ENCODE measurements at regions of chr9 and their contacts with region 1.

Region 1: GRCh38 chr9:128733256-128733655 is 9.3 kb upstream of the ZDHHC12 start:
- DNase-seq: peak; percentile 82 to 95 (median 88)
- ATAC-seq: peak; percentile 96
- H3K4me3 ChIP-seq: no peak overlapping the region
- H3K27ac ChIP-seq: peak overlapping the region; percentile 29
- H3K4me1 ChIP-seq: peaks cover 5 to 30% of the 10 kb centered on the region in 2 experiments; a peak in 4 of 5 replicates
- H3K27me3 ChIP-seq: no peaks in the 10 kb centered on the region
- CTCF ChIP-seq: peak; percentile 91 to 98 (median 91)
- EP300 ChIP-seq: no peak
- POLR2A ChIP-seq: no peak
- RAD21 ChIP-seq: peak; percentile 87 to 89

Region 2: DNA sequence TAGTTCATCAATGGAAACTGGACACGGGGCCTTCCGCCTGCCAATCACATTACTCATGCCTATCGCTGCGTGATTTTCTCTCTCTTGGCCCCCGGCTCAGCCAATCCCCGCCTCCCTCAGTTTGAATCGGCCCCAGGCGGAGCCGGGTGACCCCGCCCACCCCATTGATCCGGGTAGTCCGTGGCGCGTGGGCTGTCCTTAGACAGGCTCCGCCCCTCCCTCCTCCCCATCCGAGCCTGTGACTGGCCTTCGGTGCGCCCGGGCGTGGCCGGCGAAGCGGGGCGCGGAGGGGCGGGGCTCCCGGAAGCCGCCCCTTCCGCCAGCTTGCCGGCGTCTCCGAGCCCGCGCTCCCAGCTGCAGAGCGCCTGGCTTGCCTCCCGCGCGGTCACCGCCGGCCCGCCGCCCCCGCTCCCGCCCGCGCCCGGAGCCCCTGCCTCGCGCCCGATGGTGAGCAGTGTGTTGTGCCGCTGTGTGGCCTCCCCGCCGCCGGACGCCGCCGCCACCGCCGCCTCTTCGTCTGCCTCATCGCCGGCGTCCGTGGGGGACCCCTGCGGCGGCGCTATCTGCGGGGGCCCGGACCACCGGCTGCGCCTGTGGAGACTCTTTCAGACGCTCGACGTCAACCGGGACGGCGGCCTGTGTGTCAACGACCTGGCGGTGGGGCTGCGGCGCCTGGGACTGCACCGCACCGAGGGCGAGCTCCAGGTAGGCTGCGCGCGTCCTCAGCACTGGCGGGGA is 665.2 kb before region 1 on chr9 and contains the start of gene SLC25A25:
- CTCF ChIA-PET with region 1: no interaction called
- POLR2A ChIA-PET with region 1: no interaction called
- in situ Hi-C with region 1: no loop called
- intact Hi-C with region 1: no loop called
- DNase-seq: peak; percentile 96 to 99 (median 98)
- ATAC-seq: peak; percentile 83
- H3K4me3 ChIP-seq: peak within 1 kb of the TSS; percentile 89
- H3K27ac ChIP-seq: peak within 1 kb of the TSS; percentile 95
- H3K4me1 ChIP-seq: peaks cover 33 to 45% of the 10 kb centered on the region in 2 experiments
- H3K27me3 ChIP-seq: no peaks in the 10 kb centered on the region
- CTCF ChIP-seq: no peak
- EP300 ChIP-seq: 0 out of 2 replicates have a peak, but pooled peaks have one; percentile 8
- POLR2A ChIP-seq: no peak
- RAD21 ChIP-seq: no peak
- polyA plus RNA-seq, gene SLC25A25: 0.07 to 0.10 TPM

Region 3: GRCh38 chr9:128406848-128407391 is 326.3 kb before region 1 on chr9:
- CTCF ChIA-PET with region 1: no interaction called
- POLR2A ChIA-PET with region 1: no interaction called
- in situ Hi-C with region 1: no loop called
- intact Hi-C with region 1: no loop called
- DNase-seq: no peak
- ATAC-seq: no peak
- H3K4me3 ChIP-seq: no peak overlapping the region
- H3K27ac ChIP-seq: no peak overlapping the region
- H3K4me1 ChIP-seq: peaks cover 0 to 17% of the 10 kb centered on the region in 2 experiments; a peak in 2 of 5 replicates
- H3K27me3 ChIP-seq: peaks cover 0 to 11% of the 10 kb centered on the region in 2 experiments; a peak in 2 of 5 replicates
- CTCF ChIP-seq: no peak
- EP300 ChIP-seq: no peak
- POLR2A ChIP-seq: no peak
- RAD21 ChIP-seq: no peak

Region 4: GRCh38 chr9:128786681-128787601 is 53.7 kb after region 1 on chr9 and contains the start of gene TBC1D13:
- CTCF ChIA-PET with region 1: no interaction called
- POLR2A ChIA-PET with region 1: interaction called, 3 read pairs
- in situ Hi-C with region 1: no loop called
- intact Hi-C with region 1: loop called (anchors 1 kb)
- DNase-seq: peak; percentile 92 to 94 (median 93)
- ATAC-seq: peak; percentile 97
- H3K4me3 ChIP-seq: peak within 1 kb of the TSS; percentile 99
- H3K27ac ChIP-seq: peak within 1 kb of the TSS; percentile 88
- H3K4me1 ChIP-seq: peaks cover 20 to 26% of the 10 kb centered on the region in 2 experiments; a peak in 4 of 5 replicates
- H3K27me3 ChIP-seq: no peaks in the 10 kb centered on the region
- CTCF ChIP-seq: no peak
- EP300 ChIP-seq: peak; percentile 24; the same call in 1 of the 2 replicates
- POLR2A ChIP-seq: peak; percentile 81
- RAD21 ChIP-seq: 0 out of 4 replicates have a peak, but pooled peaks of 1 of the 2 experiments have one; percentile 25
- polyA plus RNA-seq, gene TBC1D13: 2.3 to 3.0 TPM

Region 5: GRCh38 chr9:128927731-128928411 is 194.6 kb after region 1 on chr9:
- CTCF ChIA-PET with region 1: interaction called, 14 read pairs
- POLR2A ChIA-PET with region 1: no interaction called
- in situ Hi-C with region 1: loop called (anchors 5 kb)
- intact Hi-C with region 1: loop called (anchors 1 kb)
- DNase-seq: peak; percentile 72 to 75 (median 75)
- ATAC-seq: peak; percentile 86
- H3K4me3 ChIP-seq: no peak overlapping the region
- H3K27ac ChIP-seq: no peak overlapping the region
- H3K4me1 ChIP-seq: peaks cover 4 to 13% of the 10 kb centered on the region in 2 experiments; a peak in 4 of 5 replicates
- H3K27me3 ChIP-seq: no peaks in the 10 kb centered on the region; a peak in 1 of 5 replicates
- CTCF ChIP-seq: peak; percentile 91 to 93 (median 92)
- EP300 ChIP-seq: no peak
- POLR2A ChIP-seq: no peak
- RAD21 ChIP-seq: peak; percentile 89 to 95

Region 6: DNA sequence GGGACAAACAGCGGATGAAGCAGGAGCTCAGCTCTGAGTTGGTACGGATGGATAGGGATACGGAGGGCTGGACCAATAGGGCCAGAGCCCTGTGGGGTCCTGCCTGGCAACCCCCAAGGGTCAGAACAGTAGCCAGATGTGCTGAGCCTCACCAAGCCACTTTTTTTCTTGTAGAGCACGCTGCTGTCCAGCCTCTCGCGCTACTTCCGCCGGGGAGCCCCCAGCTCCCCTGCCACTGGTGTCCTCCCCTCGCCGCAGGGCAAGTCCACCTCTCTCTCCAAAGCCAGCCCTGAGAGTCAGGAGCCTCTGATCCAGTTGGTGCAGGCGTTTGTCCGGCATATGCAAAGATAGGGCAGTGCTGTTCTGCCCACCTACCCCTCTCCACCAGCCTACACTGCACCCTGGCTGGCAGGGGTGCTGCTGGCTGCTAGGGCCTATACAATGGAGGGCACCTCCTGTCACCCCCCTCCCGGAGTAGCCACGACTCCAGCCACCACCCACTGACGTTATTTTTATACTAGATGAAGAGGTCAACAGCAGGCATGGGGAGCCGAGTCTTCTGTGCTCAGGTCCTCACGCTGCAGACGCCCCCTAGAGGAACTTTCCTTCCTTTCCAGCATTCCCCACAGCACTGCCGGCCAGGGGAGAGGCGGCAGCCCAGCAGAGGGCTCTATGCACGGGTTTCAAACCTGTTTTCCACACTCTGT is 273.2 kb after region 1 on chr9:
- CTCF ChIA-PET with region 1: no interaction called
- POLR2A ChIA-PET with region 1: no interaction called
- in situ Hi-C with region 1: no loop called
- intact Hi-C with region 1: loop called (anchors 5 kb)
- DNase-seq: peak; percentile 80 to 89 (median 84)
- ATAC-seq: peak; percentile 96
- H3K4me3 ChIP-seq: no peak overlapping the region
- H3K27ac ChIP-seq: peak overlapping the region; percentile 55; the same call in 1 of the 3 replicates
- H3K4me1 ChIP-seq: peaks cover 0 to 36% of the 10 kb centered on the region in 2 experiments; a peak in 3 of 5 replicates
- H3K27me3 ChIP-seq: no peaks in the 10 kb centered on the region
- CTCF ChIP-seq: peak; percentile 97 to 99 (median 99)
- EP300 ChIP-seq: no peak
- POLR2A ChIP-seq: peak; percentile 76
- RAD21 ChIP-seq: peak; percentile 56 to 71

Measured in K562 (cell line).